ENCODE measurements at regions of chr14 and their contacts with region 1.

Region 1: DNA sequence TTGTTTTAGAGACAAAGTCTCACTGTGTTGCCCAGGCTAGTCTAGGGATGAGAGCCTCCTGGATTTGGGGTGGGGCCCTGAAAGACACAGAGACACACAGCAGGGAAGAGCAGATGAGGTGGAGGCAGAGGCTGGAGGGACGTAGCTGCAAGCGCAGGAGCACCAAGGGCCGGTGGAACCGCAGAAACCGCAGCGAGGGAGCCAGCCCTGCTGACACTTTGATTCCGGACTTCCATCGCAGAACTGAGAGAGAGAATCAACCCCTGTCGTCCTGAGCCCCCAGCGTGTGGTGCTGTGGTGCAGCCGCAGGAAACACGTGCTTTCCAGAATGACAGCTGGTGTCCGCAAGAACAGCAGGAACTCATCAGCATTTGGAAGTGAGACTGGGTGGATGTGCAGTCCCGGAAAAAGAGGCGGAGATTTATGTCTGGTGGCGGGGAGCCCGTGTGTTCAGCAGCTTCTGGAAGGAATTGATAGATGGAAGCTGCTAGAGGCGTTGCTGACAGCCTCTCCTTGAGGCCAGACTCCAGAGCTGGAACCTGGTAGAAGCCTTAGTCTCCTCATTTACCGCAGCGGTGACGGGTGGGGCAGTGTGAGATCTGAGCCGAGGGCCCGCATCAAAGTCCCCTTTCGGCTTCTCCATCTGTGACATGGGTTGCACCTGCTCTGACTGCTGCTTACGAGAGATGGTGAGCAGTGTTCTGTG is 21.9 kb upstream of the KLC1 start:
- DNase-seq: peak; percentile 54 to 75 (median 62)
- H3K4me3 ChIP-seq: peak overlapping the region; percentile 23 to 60
- H3K4me3 Mint-ChIP-seq: peak overlapping the region; percentile 78 to 92 (median 86)
- H3K27ac ChIP-seq: no peak overlapping the region
- H3K27ac Mint-ChIP-seq: peak overlapping the region; percentile 47 to 87 (median 71)
- H3K4me1 ChIP-seq: peaks cover 21% of the 10 kb centered on the region
- H3K4me1 Mint-ChIP-seq: peaks cover 13 to 19% (median 16%) of the 10 kb centered on the region in 4 donors
- H3K27me3 ChIP-seq: no peaks in the 10 kb centered on the region
- H3K27me3 Mint-ChIP-seq: peaks cover 1 to 2% of the 10 kb centered on the region in 2 donors

Region 2: GRCh38 chr14:103463149-103463548 is 144.0 kb before region 1 on chr14:
- CTCF ChIA-PET with region 1: no interaction called
- POLR2A ChIA-PET with region 1: no interaction called
- intact Hi-C with region 1: no loop called
- DNase-seq: no peak
- H3K4me3 ChIP-seq: no peak overlapping the region
- H3K4me3 Mint-ChIP-seq: no peak overlapping the region
- H3K27ac ChIP-seq: no peak overlapping the region
- H3K27ac Mint-ChIP-seq: peak overlapping the region in 4 of 7 donors; percentile 18 to 61 (median 30)
- H3K4me1 ChIP-seq: peaks cover 5% of the 10 kb centered on the region
- H3K4me1 Mint-ChIP-seq: peaks cover 10 to 17% (median 13%) of the 10 kb centered on the region in 4 donors
- H3K27me3 ChIP-seq: no peaks in the 10 kb centered on the region
- H3K27me3 Mint-ChIP-seq: no peaks in the 10 kb centered on the region

Region 3: GRCh38 chr14:103628684-103629502 is 21.8 kb after region 1 on chr14 and contains the start of gene KLC1:
- CTCF ChIA-PET with region 1: no interaction called
- POLR2A ChIA-PET with region 1: interaction called, 14 read pairs
- intact Hi-C with region 1: no loop called
- DNase-seq: peak; percentile 75 to 86 (median 80)
- H3K4me3 ChIP-seq: peak within 1 kb of the TSS; percentile 52 to 85
- H3K4me3 Mint-ChIP-seq: peak within 1 kb of the TSS; percentile 85 to 90 (median 87)
- H3K27ac ChIP-seq: peak within 1 kb of the TSS; percentile 89
- H3K27ac Mint-ChIP-seq: peak within 1 kb of the TSS; percentile 81 to 95 (median 92)
- H3K4me1 ChIP-seq: peaks cover 62% of the 10 kb centered on the region
- H3K4me1 Mint-ChIP-seq: peaks cover 22 to 60% (median 37%) of the 10 kb centered on the region in 4 donors
- H3K27me3 ChIP-seq: no peaks in the 10 kb centered on the region
- H3K27me3 Mint-ChIP-seq: no peaks in the 10 kb centered on the region
- total RNA-seq, gene KLC1: 242 to 278 TPM

Region 4: DNA sequence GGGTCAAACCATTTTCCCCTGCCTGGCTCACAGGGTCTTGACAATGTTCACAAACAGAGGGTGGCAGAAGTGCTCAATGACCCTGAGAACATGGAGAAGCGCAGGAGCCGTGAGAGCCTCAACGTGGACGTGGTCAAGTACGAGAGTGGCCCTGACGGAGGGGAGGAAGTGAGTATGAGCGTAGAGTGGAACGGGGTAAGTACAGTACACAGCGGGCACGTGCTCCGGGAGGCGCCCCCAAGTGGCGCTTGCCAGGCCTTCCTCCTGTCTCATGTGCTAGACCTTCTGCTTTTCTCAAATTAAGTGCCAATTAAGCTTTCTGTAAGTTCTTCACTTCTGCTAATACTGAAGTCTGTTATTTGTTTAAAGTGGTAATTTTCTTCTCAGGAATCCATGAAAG is 72.2 kb after region 1 on chr14:
- CTCF ChIA-PET with region 1: no interaction called
- POLR2A ChIA-PET with region 1: no interaction called
- intact Hi-C with region 1: loop called (anchors 2 kb)
- DNase-seq: peak in 4 of 5 donors; percentile 9 to 28 (median 22)
- H3K4me3 ChIP-seq: no peak overlapping the region
- H3K4me3 Mint-ChIP-seq: no peak overlapping the region
- H3K27ac ChIP-seq: no peak overlapping the region
- H3K27ac Mint-ChIP-seq: peak overlapping the region in 5 of 7 donors; percentile 15 to 91 (median 59)
- H3K4me1 ChIP-seq: no peaks in the 10 kb centered on the region
- H3K4me1 Mint-ChIP-seq: peaks cover 0 to 1% (median 0%) of the 10 kb centered on the region in 4 donors
- H3K27me3 ChIP-seq: no peaks in the 10 kb centered on the region
- H3K27me3 Mint-ChIP-seq: no peaks in the 10 kb centered on the region

Region 5: DNA sequence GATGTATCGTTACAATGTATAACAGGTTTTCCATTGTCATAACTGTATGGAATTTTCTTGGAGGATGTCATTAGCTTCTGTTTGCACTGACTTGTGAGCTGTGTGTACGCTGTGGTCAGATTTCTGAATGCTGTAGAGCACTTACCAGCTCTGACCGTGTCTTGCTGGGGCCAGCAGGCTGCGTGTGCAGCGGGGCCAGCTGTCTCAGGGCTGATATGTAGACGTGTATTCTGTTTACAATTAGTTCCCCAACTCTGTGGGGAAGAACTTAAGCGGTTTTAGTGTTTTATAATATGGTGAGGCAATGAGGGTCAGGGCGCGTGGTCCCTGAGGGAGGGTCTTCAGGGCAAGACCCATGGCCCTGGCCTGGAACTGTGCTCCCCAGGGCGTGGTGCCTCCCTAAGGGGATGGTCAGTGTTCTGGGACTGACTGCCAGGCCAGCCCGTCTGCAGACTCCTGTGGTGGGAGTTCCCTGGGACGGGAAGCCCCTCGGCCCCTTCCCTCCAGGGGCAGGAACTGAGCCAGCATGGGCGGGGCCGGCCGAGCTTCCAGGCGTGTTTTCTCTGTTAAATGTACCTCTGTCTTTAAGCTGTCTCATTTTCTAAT is 89.5 kb after region 1 on chr14:
- CTCF ChIA-PET with region 1: no interaction called
- POLR2A ChIA-PET with region 1: no interaction called
- intact Hi-C with region 1: no loop called
- DNase-seq: no peak
- H3K4me3 ChIP-seq: no peak overlapping the region
- H3K4me3 Mint-ChIP-seq: no peak overlapping the region
- H3K27ac ChIP-seq: no peak overlapping the region
- H3K27ac Mint-ChIP-seq: peak overlapping the region in 5 of 7 donors; percentile 10 to 76 (median 32)
- H3K4me1 ChIP-seq: no peaks in the 10 kb centered on the region
- H3K4me1 Mint-ChIP-seq: peaks cover 4 to 7% (median 5%) of the 10 kb centered on the region in 4 donors
- H3K27me3 ChIP-seq: no peaks in the 10 kb centered on the region
- H3K27me3 Mint-ChIP-seq: no peaks in the 10 kb centered on the region

Measured in CD4-positive, alpha-beta memory T cell (primary cell).